ENCODE measurements at regions of chr4 and their contacts with region 1.

Region 1: GRCh38 chr4:169659716-169660670 is 39.6 kb downstream of the CLCN3 start:
- DNase-seq: peak; percentile 70
- H3K4me3 Mint-ChIP-seq: peak overlapping the region; percentile 86
- H3K27ac Mint-ChIP-seq: peak overlapping the region; percentile 97
- H3K4me1 Mint-ChIP-seq: peaks cover 26% of the 10 kb centered on the region
- H3K27me3 Mint-ChIP-seq: no peaks in the 10 kb centered on the region

Region 2: DNA sequence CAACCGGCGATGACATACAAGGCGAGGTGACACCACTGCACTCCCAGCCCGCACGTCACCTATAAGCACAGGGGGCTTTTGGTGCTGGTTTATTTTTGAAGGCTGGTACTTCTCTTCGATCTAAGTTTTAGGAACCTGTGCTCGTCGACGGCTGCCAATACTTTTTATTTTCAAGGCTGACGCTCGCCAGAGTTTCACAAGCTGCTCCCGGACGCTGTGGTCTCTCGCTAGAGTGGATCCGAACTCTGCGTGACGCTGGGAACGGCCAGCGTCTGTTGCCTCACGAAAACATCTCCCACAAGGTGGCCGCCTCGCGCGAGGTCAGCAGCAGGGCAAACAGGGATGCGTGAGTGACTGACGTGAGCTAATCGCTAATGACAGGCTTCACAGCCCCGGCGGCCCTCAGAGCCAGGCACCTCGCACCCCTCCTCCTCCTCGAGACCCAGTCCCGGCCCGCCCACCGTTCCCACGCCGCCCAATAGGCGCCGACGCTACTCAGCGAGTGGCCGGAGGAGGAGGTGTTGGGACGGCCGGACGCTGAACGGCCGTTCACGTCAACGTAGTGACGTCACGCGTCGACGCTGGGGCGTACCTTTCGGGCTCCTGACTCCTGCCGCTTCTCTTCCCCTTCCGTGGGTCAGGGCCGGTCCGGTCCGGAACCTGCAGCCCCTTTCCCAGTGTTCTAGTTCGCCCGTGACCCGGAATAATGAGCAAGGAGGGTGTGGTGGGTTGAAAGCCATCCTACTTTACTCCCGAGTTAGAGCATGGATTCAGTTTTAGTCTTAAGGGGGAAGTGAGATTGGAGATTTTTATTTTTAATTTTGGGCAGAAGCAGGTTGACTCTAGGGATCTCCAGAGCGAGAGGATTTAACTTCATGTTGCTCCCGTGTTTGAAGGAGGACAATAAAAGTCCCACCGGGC is 39.8 kb before region 1 on chr4 and contains the start of gene CLCN3:
- intact Hi-C with region 1: loop called (anchors 1 kb)
- DNase-seq: peak; percentile 88
- H3K4me3 Mint-ChIP-seq: peak within 1 kb of the TSS; percentile 94
- H3K27ac Mint-ChIP-seq: peak within 1 kb of the TSS; percentile 98
- H3K4me1 Mint-ChIP-seq: peaks cover 67% of the 10 kb centered on the region
- H3K27me3 Mint-ChIP-seq: no peaks in the 10 kb centered on the region
- total RNA-seq, gene CLCN3: 29.4 and 30.2 TPM in 2 replicates

Region 3: DNA sequence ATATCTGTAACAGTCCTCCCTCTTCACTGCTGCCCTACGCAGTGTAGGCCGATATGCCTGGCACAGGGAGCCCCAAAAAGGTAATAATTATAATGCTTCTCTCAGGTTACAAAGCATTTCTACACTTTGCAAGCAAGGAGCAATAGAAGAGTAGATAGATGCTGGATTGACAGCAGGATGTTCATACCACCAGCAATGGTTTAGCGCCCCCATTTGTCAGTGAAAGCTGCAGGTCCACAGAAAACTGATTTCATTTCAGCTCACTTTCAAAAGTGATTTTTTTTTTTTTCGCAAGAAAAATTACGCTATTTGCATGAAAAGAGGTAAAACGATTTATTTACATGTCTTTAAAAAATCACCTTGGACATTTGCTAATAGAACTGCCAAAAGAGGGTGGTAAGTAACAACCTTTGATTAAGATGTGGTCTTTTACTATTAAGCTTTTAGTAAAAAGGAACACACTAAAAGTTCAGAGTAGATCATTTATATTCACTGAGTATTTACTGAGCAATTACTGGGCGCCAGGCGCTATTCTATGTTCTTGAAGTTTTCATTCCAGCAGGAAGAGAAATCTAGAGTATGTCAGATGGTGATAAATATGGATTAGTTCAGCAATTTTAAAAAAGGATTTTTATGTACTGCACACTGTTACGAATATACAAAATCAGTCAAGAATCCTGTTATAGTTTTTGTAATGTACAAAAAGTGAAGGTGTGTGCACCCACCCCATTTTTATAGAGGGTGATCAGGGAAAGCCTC is 63.4 kb after region 1 on chr4:
- intact Hi-C with region 1: no loop called
- DNase-seq: no peak
- H3K4me3 Mint-ChIP-seq: no peak overlapping the region
- H3K27ac Mint-ChIP-seq: no peak overlapping the region
- H3K4me1 Mint-ChIP-seq: peaks cover 12% of the 10 kb centered on the region
- H3K27me3 Mint-ChIP-seq: no peaks in the 10 kb centered on the region

Region 4: DNA sequence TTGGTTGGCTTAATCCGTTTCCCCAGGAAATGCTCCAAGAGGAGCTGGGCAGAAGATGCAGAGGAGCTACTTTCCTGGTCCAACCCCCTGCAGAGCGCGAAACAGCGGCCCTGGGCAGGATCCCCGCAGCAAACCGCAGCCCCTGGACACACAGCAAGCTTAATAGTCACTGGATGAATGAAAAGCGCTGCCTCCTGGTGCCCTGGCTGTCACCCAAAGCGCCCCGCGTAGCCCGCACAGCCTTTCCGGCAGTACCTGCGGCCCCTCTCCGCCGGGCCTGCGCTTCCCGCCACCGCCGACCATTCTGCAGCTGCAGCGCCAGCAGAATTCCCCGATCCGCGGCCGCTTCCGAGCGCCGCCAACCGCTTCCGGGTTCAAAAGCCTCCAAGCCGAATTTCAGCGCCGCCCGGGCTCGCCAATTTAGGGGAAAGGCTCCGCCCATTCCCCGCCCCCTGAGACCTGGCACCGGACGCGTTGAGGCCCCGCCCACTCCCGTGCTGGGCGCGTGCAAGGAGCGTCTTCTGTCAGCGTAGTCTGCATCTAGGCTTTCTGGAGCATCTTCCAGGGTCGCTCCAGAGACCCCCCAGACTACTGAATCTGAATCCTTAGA is 97.7 kb after region 1 on chr4 and contains the start of gene HPF1:
- intact Hi-C with region 1: loop called (anchors 1 kb)
- DNase-seq: peak; percentile 92
- H3K4me3 Mint-ChIP-seq: peak within 1 kb of the TSS; percentile 93
- H3K27ac Mint-ChIP-seq: peak within 1 kb of the TSS; percentile 69
- H3K4me1 Mint-ChIP-seq: peaks cover 32% of the 10 kb centered on the region
- H3K27me3 Mint-ChIP-seq: peaks cover 2% of the 10 kb centered on the region
- total RNA-seq, gene HPF1: 21.5 and 23.4 TPM in 2 replicates

Measured in activated T-helper 1 cell treated with anti-CD3 and anti-CD28 coated beads, Interleukin-12 subunit alpha, Interleukin-12 subunit beta, Interleukin-2, Interleukin-4 antibody, amounts not matched to agents 30 ng/mL and 10 ng/mL and 1 ng/mL, durations not matched to agents 14 hours and 24 hours and 36 hours (primary cell).